IMR-90 (cell line): ENCODE measurements at regions of chr4 and their contacts with region 1.

Region 1: GRCh38 chr4:1351854-1352633 is 5.0 kb downstream of the UVSSA start:
- DNase-seq: peak; percentile 70
- ATAC-seq: peak; percentile 24
- H3K4me3 ChIP-seq: no peak overlapping the region
- H3K27ac ChIP-seq: no peak overlapping the region
- H3K4me1 ChIP-seq: peaks cover 5% of the 10 kb centered on the region
- H3K27me3 ChIP-seq: no peaks in the 10 kb centered on the region
- CTCF ChIP-seq: peak; percentile 86
- POLR2A ChIP-seq: no peak
- RAD21 ChIP-seq: peak; percentile 78

Region 2: GRCh38 chr4:1512738-1513660 is 161.0 kb after region 1 on chr4:
- CTCF ChIA-PET with region 1: no interaction called
- POLR2A ChIA-PET with region 1: no interaction called
- dilution Hi-C with region 1: no loop called
- in situ Hi-C with region 1: no loop called
- intact Hi-C with region 1: loop called (anchors 5 kb)
- DNase-seq: no peak
- ATAC-seq: peak; percentile 91
- H3K4me3 ChIP-seq: no peak overlapping the region; the same call in 1 of the 2 replicates
- H3K27ac ChIP-seq: no peak overlapping the region
- H3K4me1 ChIP-seq: no peaks in the 10 kb centered on the region
- H3K27me3 ChIP-seq: peaks cover 62% of the 10 kb centered on the region
- CTCF ChIP-seq: peak; percentile 48
- POLR2A ChIP-seq: no peak
- RAD21 ChIP-seq: peak; percentile 45

Region 3: DNA sequence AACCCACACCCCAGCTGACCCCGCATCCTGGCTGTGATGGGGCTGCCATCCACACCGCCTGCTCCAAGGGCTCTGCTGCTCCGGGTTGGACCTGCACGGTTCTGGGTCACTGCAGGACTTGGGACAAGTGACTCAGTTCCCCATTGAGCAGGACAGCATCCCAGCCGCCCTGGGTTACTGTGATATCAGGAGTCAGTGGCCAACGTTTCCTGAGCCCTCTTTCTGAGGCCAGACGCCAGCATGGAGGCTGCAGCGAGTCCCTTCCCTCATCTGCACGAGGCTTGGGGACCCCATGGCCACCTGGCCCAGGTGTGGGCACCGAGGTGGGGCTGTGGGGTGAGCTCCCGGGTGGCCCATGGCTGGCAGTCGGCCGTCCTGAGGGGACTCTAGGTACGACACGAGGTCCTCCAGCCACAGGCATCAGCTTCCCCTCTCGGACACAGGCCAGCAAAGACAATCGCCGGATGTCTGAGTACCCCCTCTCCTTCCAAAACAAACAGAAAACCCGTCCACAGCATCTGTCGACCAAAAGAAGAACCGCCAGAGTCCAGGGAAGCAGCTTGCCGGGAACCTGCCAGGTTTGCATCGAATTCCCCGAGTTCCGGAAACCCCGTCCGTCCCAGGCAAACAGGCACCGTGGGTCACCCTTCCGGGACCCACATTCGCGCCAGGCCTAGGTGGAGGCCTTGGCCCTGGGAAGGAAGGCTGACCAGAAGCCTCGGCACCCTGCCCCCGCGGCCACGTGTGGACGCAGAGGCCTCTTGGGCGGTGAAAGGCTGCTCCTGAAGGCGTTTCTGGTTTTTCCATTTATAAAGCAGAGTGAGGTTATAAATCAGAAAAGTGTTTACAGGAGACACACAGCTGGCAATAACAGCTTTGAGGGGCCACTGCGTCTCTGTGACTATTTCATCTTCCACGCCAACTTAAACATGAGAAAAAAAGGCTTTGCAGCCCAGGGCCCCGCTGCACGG is 196.1 kb after region 1 on chr4:
- CTCF ChIA-PET with region 1: no interaction called
- POLR2A ChIA-PET with region 1: no interaction called
- dilution Hi-C with region 1: no loop called
- in situ Hi-C with region 1: no loop called
- intact Hi-C with region 1: loop called (anchors 2 kb)
- DNase-seq: no peak
- ATAC-seq: no peak
- H3K4me3 ChIP-seq: no peak overlapping the region
- H3K27ac ChIP-seq: no peak overlapping the region
- H3K4me1 ChIP-seq: no peaks in the 10 kb centered on the region
- H3K27me3 ChIP-seq: peaks cover 20% of the 10 kb centered on the region; the same call in 1 of the 2 replicates
- CTCF ChIP-seq: no peak
- POLR2A ChIP-seq: no peak
- RAD21 ChIP-seq: no peak

Region 4: GRCh38 chr4:1628892-1629698 is 277.1 kb after region 1 on chr4:
- CTCF ChIA-PET with region 1: no interaction called
- POLR2A ChIA-PET with region 1: no interaction called
- dilution Hi-C with region 1: no loop called
- in situ Hi-C with region 1: loop called (anchors 10 kb)
- intact Hi-C with region 1: loop called (anchors 1 kb)
- DNase-seq: peak; percentile 6
- ATAC-seq: peak; percentile 99
- H3K4me3 ChIP-seq: no peak overlapping the region
- H3K27ac ChIP-seq: no peak overlapping the region
- H3K4me1 ChIP-seq: no peaks in the 10 kb centered on the region
- H3K27me3 ChIP-seq: no peaks in the 10 kb centered on the region; the same call in 1 of the 2 replicates
- CTCF ChIP-seq: peak; percentile 81
- POLR2A ChIP-seq: no peak
- RAD21 ChIP-seq: peak; percentile 77